ENCODE measurements at regions of chr10 and their contacts with region 1.

Region 1: GRCh38 chr10:73060738-73061635 is 35.7 kb downstream of the P4HA1 start:
- DNase-seq: no peak
- H3K4me3 Mint-ChIP-seq: no peak overlapping the region
- H3K27ac Mint-ChIP-seq: peak overlapping the region; percentile 80
- H3K4me1 Mint-ChIP-seq: peaks cover 21% of the 10 kb centered on the region
- H3K27me3 Mint-ChIP-seq: no peaks in the 10 kb centered on the region

Region 2: GRCh38 chr10:72563327-72563932 is 497.6 kb before region 1 on chr10:
- intact Hi-C with region 1: loop called (anchors 2 kb)
- DNase-seq: peak; percentile 79
- H3K4me3 Mint-ChIP-seq: peak overlapping the region; percentile 75
- H3K27ac Mint-ChIP-seq: peak overlapping the region; percentile 96
- H3K4me1 Mint-ChIP-seq: peaks cover 41% of the 10 kb centered on the region
- H3K27me3 Mint-ChIP-seq: no peaks in the 10 kb centered on the region

Region 3: GRCh38 chr10:72692057-72692910 is 368.7 kb before region 1 on chr10 and contains the start of gene MCU:
- intact Hi-C with region 1: loop called (anchors 5 kb)
- DNase-seq: peak; percentile 98
- H3K4me3 Mint-ChIP-seq: peak within 1 kb of the TSS; percentile 88
- H3K27ac Mint-ChIP-seq: peak within 1 kb of the TSS; percentile 54
- H3K4me1 Mint-ChIP-seq: peaks cover 29% of the 10 kb centered on the region
- H3K27me3 Mint-ChIP-seq: peaks cover 8% of the 10 kb centered on the region
- total RNA-seq, gene MCU: 13.5 and 15.9 TPM in 2 replicates

Region 4: DNA sequence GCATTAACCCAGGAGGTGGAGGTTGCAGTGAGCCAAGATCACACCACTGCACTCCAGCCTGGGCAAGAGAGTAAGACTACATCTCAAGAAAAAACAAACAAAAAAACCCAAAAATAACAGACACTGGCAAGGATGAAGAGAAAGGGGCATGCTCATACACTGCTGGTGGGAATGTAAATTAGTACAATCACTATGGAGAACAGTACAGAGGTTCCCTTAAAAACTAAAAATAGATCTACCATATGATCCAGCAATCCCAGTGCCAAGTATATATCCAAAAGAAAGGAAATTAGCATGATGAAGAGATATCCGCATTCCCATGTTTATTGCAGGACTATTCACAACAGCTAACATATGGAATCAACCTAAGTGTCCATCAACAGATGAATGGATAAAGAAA is 39.9 kb before region 1 on chr10:
- intact Hi-C with region 1: loop called (anchors 5 kb)
- DNase-seq: no peak
- H3K4me3 Mint-ChIP-seq: no peak overlapping the region
- H3K27ac Mint-ChIP-seq: peak overlapping the region; percentile 35
- H3K4me1 Mint-ChIP-seq: peaks cover 41% of the 10 kb centered on the region
- H3K27me3 Mint-ChIP-seq: no peaks in the 10 kb centered on the region

Region 5: GRCh38 chr10:73044378-73045285 is 16.4 kb before region 1 on chr10:
- intact Hi-C with region 1: no loop called
- DNase-seq: no peak
- H3K4me3 Mint-ChIP-seq: no peak overlapping the region
- H3K27ac Mint-ChIP-seq: peak overlapping the region; percentile 25
- H3K4me1 Mint-ChIP-seq: peaks cover 7% of the 10 kb centered on the region
- H3K27me3 Mint-ChIP-seq: no peaks in the 10 kb centered on the region

Region 6: DNA sequence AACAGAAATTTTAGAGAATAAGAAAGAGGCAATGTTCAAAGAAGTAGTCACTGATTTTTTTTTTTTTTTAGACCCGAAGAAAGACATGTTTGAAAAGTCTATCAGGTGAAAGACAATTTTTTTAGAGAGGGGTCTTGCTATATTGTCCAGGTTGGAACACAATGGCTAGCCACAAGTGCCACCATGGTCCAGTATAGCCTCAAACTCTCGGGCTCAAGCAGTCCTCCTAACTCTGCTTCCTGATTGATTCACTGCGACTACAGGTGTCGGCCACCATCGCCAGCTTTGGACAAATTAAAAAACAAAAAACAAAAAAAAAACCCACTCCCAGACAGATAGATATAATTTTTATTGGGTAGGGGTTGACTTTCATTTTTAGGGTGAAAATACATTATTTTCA is 129.2 kb after region 1 on chr10:
- intact Hi-C with region 1: no loop called
- DNase-seq: no peak
- H3K4me3 Mint-ChIP-seq: no peak overlapping the region
- H3K27ac Mint-ChIP-seq: no peak overlapping the region
- H3K4me1 Mint-ChIP-seq: no peaks in the 10 kb centered on the region
- H3K27me3 Mint-ChIP-seq: no peaks in the 10 kb centered on the region